Naive thymus-derived CD4-positive, alpha-beta T cell (primary cell): ENCODE measurements at regions of chr6 and their contacts with region 1.

Region 1: GRCh38 chr6:42563697-42564505 is at the start of gene UBR2:
- DNase-seq: peak; percentile 67 to 97 (median 93)
- ATAC-seq: peak; percentile 99
- H3K4me3 ChIP-seq: peak within 1 kb of the TSS; percentile 92
- H3K4me3 Mint-ChIP-seq: peak within 1 kb of the TSS; percentile 94 to 100 (median 96)
- H3K27ac ChIP-seq: peak within 1 kb of the TSS; percentile 95
- H3K27ac Mint-ChIP-seq: peak within 1 kb of the TSS; percentile 89 to 98 (median 93)
- H3K4me1 ChIP-seq: peaks cover 7 to 12% of the 10 kb centered on the region in 2 donors
- H3K4me1 Mint-ChIP-seq: peaks cover 17 to 43% (median 29%) of the 10 kb centered on the region in 7 donors
- H3K27me3 ChIP-seq: no peaks in the 10 kb centered on the region
- H3K27me3 Mint-ChIP-seq: peaks cover 0 to 7% (median 0%) of the 10 kb centered on the region in 5 donors
- total RNA-seq, gene UBR2: 35.6 to 45.5 (median 38.9) TPM

Region 2: DNA sequence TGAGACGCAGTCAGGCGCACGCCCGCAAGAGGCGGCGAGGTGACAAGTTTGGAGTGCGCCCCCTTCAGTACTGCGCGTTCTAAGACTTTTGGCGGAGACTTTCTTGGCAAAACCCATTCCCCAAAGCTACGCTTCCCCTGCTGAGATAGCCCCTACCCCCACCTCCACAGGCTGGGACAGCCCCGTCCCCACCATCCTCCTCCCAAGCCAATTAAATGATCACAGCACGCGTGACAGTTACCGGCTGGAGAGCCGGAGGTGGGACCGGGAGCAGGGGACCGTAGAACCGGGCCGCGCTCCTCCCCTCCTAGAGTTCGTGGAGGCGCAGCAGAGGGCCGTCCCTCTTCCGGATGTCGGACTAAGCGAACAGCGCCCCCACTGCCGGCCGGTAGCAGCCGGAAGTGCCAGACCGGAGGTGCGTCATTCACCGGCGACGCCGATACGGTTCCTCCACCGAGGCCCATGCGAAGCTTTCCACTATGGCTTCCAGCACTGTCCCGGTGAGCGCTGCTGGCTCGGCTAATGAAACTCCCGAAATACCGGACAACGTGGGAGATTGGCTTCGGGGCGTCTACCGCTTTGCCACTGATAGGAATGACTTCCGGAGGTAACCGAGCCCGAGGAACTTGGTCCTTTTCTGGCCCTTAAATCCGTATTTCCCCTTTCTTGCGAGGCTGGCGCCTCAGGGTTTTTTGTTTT is 776.5 kb before region 1 on chr6 and contains the start of gene TOMM6:
- CTCF ChIA-PET with region 1: interaction called, 6 read pairs
- POLR2A ChIA-PET with region 1: interaction called, 6 read pairs
- intact Hi-C with region 1: loop called (anchors 1 to 2 kb)
- DNase-seq: peak; percentile 87 to 96 (median 94)
- ATAC-seq: peak; percentile 88
- H3K4me3 ChIP-seq: peak within 1 kb of the TSS; percentile 97
- H3K4me3 Mint-ChIP-seq: peak within 1 kb of the TSS; percentile 91 to 99 (median 97)
- H3K27ac ChIP-seq: peak within 1 kb of the TSS; percentile 89
- H3K27ac Mint-ChIP-seq: peak within 1 kb of the TSS; percentile 95 to 99 (median 98)
- H3K4me1 ChIP-seq: peaks cover 6 to 9% of the 10 kb centered on the region in 2 donors
- H3K4me1 Mint-ChIP-seq: peaks cover 8 to 29% (median 17%) of the 10 kb centered on the region in 7 donors
- H3K27me3 ChIP-seq: no peaks in the 10 kb centered on the region
- H3K27me3 Mint-ChIP-seq: peaks cover 0 to 14% (median 0%) of the 10 kb centered on the region in 5 donors
- total RNA-seq, gene TOMM6: 114 to 193 (median 128) TPM

Region 3: DNA sequence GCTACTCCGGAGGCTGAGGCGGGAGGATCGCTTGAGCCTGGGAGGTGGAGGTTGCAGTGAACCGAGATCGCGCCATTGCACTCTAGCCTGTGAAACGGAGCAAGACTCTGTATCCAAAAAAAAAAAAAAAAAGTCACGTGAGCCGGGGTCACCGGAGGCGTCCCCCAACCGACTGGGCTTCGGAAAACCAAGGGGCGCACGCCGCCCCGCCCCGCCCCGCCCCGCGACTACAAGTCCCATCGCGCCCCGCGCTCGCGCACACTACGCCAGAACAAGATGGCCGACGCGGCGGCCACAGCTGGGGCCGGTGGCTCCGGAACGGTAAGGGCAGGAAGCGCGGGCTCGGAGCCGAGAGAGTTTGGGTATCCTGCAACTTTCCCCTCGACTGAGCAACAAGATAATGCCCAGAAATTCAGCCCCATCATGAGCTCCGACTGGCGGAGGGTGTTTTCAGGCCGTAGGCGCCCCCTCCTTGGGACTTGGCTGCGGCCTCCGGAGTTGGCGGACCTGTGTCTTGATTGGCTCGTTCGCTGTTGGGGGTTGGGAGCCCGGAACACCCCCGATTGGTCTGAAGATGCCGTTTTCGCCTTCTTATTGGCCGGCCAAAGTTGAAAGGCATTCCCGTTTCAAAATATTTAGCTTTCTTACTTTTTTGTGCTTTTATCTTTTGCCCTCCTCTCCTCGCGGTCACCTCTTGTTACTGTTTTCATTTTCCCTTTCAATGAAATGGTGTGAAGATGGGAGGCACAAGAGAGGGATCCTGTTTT is 513.5 kb before region 1 on chr6 and contains the start of gene TAF8:
- CTCF ChIA-PET with region 1: no interaction called
- POLR2A ChIA-PET with region 1: interaction called, 3 read pairs
- intact Hi-C with region 1: loop called (anchors 1 kb)
- DNase-seq: peak; percentile 76 to 89 (median 87)
- ATAC-seq: peak; percentile 80
- H3K4me3 ChIP-seq: peak within 1 kb of the TSS; percentile 98
- H3K4me3 Mint-ChIP-seq: peak within 1 kb of the TSS; percentile 89 to 99 (median 99)
- H3K27ac ChIP-seq: peak within 1 kb of the TSS; percentile 78
- H3K27ac Mint-ChIP-seq: peak within 1 kb of the TSS; percentile 93 to 98 (median 97)
- H3K4me1 ChIP-seq: peaks cover 24 to 27% of the 10 kb centered on the region in 2 donors
- H3K4me1 Mint-ChIP-seq: peaks cover 36 to 70% (median 51%) of the 10 kb centered on the region in 7 donors
- H3K27me3 ChIP-seq: no peaks in the 10 kb centered on the region
- H3K27me3 Mint-ChIP-seq: no peaks in the 10 kb centered on the region
- total RNA-seq, gene TAF8: 41.6 to 58.2 (median 50.8) TPM

Region 4: DNA sequence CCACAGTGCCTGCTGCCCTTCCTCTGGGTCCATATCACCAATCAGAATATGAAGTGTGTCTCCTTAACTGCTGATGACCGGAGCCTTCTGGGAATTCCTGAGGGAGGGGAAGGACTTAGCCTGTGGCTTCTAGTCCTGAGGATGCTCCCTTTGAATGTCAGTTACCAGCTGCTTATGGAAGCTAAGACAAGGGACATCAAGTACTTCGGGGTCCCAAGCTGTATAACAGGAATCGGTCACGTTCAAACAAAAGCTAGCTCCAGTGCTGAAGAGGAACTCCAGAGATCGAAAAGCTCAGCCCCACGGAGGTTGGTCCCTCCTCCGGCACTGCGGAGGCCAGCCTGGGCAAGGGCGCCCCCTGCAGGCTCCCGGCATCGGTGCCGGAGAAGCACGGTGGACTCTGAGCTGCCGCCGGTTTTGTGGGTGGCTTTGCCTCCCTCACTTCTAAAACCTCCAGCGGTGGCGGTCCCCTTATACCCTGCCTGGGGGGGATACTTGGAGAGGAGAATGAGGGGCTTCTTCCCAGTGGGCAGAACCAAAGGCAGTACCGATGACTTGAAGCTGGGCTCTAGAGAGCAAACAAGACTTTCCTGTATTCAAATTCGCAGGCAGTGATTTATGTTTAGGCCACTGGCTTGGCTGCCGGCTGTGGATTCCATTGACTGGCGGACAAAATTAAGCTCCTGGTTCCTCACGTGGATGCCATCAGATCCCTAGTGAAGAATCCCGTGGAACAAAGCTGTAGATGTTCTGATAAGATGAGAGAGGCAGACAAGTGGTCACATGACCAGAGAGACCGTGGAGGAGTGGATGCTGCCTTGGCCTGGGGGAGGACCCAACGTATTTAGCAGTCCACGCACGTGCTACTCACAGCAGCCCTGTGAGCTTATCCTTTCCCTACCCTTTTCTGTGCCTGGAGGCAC is 16.2 kb before region 1 on chr6:
- CTCF ChIA-PET with region 1: interaction called, 23 read pairs
- POLR2A ChIA-PET with region 1: interaction called, 5 read pairs
- intact Hi-C with region 1: loop called in 1 of 2 experiments (anchors 1 kb)
- DNase-seq: peak; percentile 73 to 94 (median 86)
- ATAC-seq: peak; percentile 100
- H3K4me3 ChIP-seq: peak overlapping the region; percentile 52
- H3K4me3 Mint-ChIP-seq: peak overlapping the region; percentile 23 to 78 (median 68)
- H3K27ac ChIP-seq: peak overlapping the region; percentile 26
- H3K27ac Mint-ChIP-seq: peak overlapping the region in 7 of 9 donors; percentile 42 to 74 (median 48)
- H3K4me1 ChIP-seq: peaks cover 5 to 13% of the 10 kb centered on the region in 2 donors
- H3K4me1 Mint-ChIP-seq: peaks cover 5 to 14% (median 12%) of the 10 kb centered on the region in 7 donors
- H3K27me3 ChIP-seq: no peaks in the 10 kb centered on the region
- H3K27me3 Mint-ChIP-seq: peaks cover 0 to 12% (median 9%) of the 10 kb centered on the region in 5 donors

Region 5: DNA sequence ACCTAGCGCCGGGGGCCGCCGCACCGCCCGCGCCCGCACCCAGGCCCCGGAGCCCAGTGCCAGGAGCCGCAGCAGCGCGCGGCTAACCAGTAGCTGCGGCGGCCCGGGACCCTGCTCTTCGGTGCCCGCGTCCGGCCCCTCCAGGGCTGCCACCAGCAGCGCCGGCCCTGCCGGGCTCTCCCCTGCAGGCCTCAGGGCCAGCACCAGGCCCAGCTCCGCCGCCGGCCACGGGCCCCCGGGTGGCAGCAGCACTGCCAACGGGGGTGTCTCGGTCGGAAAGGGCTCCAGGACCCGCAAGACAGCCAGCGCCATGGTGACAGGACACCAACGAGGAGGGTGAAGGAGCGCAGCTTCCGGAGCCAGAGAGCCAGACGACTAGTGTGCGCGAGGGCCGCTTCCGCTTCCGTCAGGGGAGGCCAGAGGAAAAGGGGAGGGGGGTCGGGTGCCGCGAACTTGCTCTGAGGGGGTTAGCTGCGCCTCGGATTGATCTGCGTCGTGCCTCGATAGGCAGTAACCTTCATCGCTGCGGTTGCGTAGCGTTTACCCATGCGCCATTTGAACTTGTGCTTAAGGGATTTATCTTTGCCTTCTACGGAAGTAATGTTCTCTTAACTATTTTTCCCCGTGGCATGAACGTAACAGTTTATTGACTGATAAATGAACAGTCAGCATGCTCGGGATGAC is 415.1 kb after region 1 on chr6 and contains the start of gene PEX6:
- CTCF ChIA-PET with region 1: no interaction called
- POLR2A ChIA-PET with region 1: interaction called, 3 read pairs
- intact Hi-C with region 1: loop called in 1 of 2 experiments (anchors 1 kb)
- DNase-seq: peak; percentile 77 to 98 (median 93)
- ATAC-seq: peak; percentile 97
- H3K4me3 ChIP-seq: peak within 1 kb of the TSS; percentile 90
- H3K4me3 Mint-ChIP-seq: peak within 1 kb of the TSS; percentile 91 to 99 (median 94)
- H3K27ac ChIP-seq: peak within 1 kb of the TSS; percentile 85
- H3K27ac Mint-ChIP-seq: peak within 1 kb of the TSS; percentile 92 to 99 (median 98)
- H3K4me1 ChIP-seq: peaks cover 30 to 32% of the 10 kb centered on the region in 2 donors
- H3K4me1 Mint-ChIP-seq: peaks cover 19 to 61% (median 47%) of the 10 kb centered on the region in 7 donors
- H3K27me3 ChIP-seq: no peaks in the 10 kb centered on the region
- H3K27me3 Mint-ChIP-seq: no peaks in the 10 kb centered on the region
- total RNA-seq, gene PEX6: 14.1 to 42.3 (median 28.0) TPM

Region 6: DNA sequence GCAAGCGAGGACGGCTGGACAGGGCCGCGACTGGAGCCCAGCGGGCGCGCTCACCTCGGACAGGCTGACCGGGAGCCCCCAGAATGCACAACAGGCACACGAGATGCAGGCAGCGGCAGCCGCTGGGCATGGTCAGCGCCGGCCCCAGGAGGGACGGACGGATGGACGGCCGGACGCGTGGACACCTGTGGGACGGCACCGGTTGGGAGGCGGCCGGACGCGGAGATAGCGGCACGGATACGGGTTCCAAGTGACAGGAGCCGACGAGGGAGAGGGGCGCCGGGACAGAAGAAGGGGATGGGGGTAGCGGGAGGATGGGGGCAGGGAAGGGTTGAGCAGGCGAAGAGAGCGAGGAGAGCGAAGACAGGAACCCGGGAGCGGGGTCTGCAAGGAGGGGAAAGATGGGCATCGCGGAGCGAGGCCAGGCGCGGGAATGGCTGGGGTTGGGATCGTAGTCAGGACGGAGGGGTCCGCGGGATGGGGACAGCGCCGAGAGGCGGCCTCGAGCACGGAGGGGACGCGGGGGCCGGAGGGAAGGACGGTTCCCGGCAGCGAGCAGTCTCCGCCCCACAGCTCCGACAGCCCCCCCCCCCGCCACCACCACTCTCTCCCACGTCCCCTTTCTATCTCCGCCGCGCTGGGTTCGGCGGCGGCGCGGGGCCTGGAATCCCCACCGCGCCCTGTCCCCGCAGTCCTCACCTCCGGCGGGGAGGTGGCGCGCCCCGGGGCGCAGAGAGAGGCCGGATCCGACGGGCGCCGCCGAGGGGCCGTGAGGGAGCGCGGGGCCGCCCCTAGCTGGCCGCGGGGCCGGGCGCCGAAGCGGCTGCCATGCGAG is 891.0 kb after region 1 on chr6:
- CTCF ChIA-PET with region 1: no interaction called
- POLR2A ChIA-PET with region 1: no interaction called
- intact Hi-C with region 1: loop called in 1 of 2 experiments (anchors 10 kb)
- DNase-seq: peak in 7 of 9 donors; percentile 28 to 42 (median 31)
- ATAC-seq: peak; percentile 61
- H3K4me3 ChIP-seq: peak overlapping the region; percentile 69
- H3K4me3 Mint-ChIP-seq: peak overlapping the region; percentile 71 to 92 (median 85)
- H3K27ac ChIP-seq: peak overlapping the region; percentile 63
- H3K27ac Mint-ChIP-seq: peak overlapping the region in 7 of 9 donors; percentile 34 to 91 (median 70)
- H3K4me1 ChIP-seq: peaks cover 6 to 7% of the 10 kb centered on the region in 2 donors
- H3K4me1 Mint-ChIP-seq: peaks cover 10 to 19% (median 12%) of the 10 kb centered on the region in 7 donors
- H3K27me3 ChIP-seq: no peaks in the 10 kb centered on the region
- H3K27me3 Mint-ChIP-seq: peaks cover 0 to 34% (median 0%) of the 10 kb centered on the region in 5 donors